ENCODE measurements at regions of chr9 and their contacts with region 1.

Region 1: GRCh38 chr9:102587281-102587680 is 407.9 kb upstream of the CYLC2 start:
- DNase-seq: no peak
- ATAC-seq: no peak
- H3K4me3 ChIP-seq: no peak overlapping the region
- H3K27ac ChIP-seq: no peak overlapping the region
- H3K4me1 ChIP-seq: no peaks in the 10 kb centered on the region
- H3K27me3 ChIP-seq: no peaks in the 10 kb centered on the region

Region 2: DNA sequence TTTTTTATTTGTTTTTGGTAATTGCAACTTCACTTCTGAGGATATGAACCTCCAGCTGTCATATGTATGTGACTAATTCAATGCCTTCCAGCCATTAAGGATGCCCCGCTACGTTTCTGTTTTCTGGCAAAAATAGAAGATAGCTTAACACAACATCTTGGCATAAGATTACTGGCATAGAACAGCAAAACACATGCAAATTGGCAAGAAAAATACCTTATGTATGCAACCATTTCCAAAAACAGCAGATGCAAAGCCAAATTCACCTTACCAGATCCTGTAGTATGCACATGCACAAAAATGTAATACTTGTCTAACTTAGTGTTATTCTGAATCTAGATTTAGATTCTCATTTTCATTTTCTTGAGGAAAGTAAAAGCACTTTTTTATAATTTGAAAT is 53.2 kb before region 1 on chr9:
- intact Hi-C with region 1: no loop called
- DNase-seq: no peak
- ATAC-seq: no peak
- H3K4me3 ChIP-seq: no peak overlapping the region
- H3K27ac ChIP-seq: no peak overlapping the region
- H3K4me1 ChIP-seq: no peaks in the 10 kb centered on the region
- H3K27me3 ChIP-seq: no peaks in the 10 kb centered on the region

Region 3: GRCh38 chr9:102609461-102609860 is 22.2 kb after region 1 on chr9:
- intact Hi-C with region 1: loop called in 1 of 2 experiments (anchors 2 kb)
- DNase-seq: no peak
- ATAC-seq: no peak
- H3K4me3 ChIP-seq: no peak overlapping the region
- H3K27ac ChIP-seq: no peak overlapping the region
- H3K4me1 ChIP-seq: no peaks in the 10 kb centered on the region
- H3K27me3 ChIP-seq: no peaks in the 10 kb centered on the region